Activated CD8-positive, alpha-beta T cell treated with anti-CD3 and anti-CD28 coated beads for 36 hours (primary cell): ENCODE measurements at regions of chr2 and their contacts with region 1.

Region 1: DNA sequence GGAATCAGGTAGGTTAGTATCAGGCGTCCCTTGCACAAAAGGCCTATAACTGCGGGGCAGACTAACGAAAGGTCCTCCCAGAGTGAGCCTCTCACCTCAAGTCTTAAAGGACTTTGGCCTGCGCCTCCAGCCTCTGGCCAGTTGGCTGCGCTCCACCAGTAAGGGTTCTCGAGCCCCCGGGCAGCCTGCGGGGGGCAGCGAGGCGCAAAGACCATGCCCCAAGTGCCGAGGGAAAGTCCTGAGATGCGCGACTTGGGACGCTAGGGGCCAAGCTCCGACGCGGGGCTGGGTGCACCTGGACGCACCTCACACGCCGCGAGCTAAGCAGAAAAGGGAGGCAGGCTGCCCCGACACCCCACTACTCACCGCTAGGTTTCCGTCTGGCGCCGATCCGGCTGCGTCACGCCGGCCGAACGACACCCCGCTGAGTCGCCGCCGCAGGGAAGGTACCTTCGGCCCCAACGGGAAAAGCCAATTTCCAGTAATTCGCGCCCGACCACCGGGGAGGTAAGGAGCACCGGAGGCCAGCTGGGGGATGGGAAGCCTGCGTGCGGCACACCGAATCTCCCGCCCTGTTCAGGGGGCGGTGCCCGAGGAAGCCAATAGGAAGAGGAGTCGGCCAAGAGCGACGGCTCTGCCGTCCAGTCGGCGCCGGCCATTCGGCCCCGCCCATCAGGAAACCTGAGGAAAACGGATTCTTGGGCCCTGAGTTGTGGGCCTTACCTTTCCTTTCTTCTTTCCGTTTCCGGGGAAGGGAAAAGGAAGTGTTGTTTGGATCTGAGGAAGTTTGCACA is at the start of gene ORC2:
- DNase-seq: peak; percentile 94
- ATAC-seq: peak; percentile 97
- H3K4me3 Mint-ChIP-seq: peak within 1 kb of the TSS; percentile 92
- H3K27ac Mint-ChIP-seq: peak within 1 kb of the TSS; percentile 96
- H3K4me1 Mint-ChIP-seq: peaks cover 55% of the 10 kb centered on the region
- H3K27me3 Mint-ChIP-seq: no peaks in the 10 kb centered on the region
- CTCF ChIP-seq: peak; percentile 87
- total RNA-seq, gene ORC2: 51.3 to 59.2 TPM

Region 2: DNA sequence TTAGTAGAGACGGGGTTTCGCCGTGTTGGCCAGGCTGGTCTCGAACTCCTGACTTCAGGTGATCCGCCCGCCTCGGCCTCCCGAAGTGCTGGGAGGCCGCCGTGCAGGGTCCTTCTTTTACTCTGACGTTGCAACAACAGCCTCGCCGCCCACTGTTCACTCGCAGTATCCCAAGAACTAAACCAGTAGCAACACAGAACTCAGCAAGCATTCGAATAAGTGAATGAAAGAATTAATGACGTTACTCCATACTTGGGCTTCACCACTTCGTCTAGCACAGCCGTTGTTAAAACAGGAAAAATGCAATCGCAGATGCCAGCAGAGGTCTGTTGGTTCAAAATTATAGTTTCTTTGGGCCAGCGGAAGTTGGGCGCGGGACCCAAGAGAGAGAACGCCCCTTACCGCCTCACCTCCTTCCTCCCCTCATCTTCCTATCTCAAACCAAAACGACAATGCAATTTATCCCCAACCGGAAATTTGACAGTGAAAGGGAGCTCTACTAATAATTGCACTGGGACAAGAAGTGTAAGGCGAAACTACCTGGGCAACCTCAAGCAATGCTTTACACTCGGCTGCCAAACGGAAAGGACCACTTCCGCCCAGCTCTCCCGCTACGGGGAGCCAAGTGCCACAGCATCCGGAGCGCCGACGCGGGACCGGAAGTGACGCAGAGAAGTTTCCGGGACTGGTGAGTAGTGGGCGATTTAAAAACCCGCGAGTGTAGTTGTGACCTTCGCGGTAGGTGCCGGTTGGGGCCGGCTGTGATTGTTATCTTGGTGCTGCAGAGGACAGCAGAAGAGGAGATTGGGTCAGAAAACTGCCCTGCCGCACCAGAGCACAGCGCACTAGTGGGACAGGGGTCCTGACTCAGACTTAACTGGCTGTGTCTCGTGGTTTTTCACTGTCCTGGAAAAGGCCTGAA is 74.4 kb before region 1 on chr2 and contains the starts of genes NIF3L1 and PPIL3:
- CTCF ChIA-PET with region 1: interaction called, 3 read pairs
- POLR2A ChIA-PET with region 1: interaction called, 13 read pairs
- intact Hi-C with region 1: no loop called
- DNase-seq: peak; percentile 99
- ATAC-seq: peak; percentile 83
- H3K4me3 Mint-ChIP-seq: peak within 1 kb of the TSS; percentile 87
- H3K27ac Mint-ChIP-seq: peak within 1 kb of the TSS; percentile 99
- H3K4me1 Mint-ChIP-seq: peaks cover 46% of the 10 kb centered on the region
- H3K27me3 Mint-ChIP-seq: no peaks in the 10 kb centered on the region
- CTCF ChIP-seq: no peak
- total RNA-seq, gene NIF3L1: 30.8 to 35.3 TPM
- total RNA-seq, gene PPIL3: 97.9 to 99.4 TPM

Region 3: DNA sequence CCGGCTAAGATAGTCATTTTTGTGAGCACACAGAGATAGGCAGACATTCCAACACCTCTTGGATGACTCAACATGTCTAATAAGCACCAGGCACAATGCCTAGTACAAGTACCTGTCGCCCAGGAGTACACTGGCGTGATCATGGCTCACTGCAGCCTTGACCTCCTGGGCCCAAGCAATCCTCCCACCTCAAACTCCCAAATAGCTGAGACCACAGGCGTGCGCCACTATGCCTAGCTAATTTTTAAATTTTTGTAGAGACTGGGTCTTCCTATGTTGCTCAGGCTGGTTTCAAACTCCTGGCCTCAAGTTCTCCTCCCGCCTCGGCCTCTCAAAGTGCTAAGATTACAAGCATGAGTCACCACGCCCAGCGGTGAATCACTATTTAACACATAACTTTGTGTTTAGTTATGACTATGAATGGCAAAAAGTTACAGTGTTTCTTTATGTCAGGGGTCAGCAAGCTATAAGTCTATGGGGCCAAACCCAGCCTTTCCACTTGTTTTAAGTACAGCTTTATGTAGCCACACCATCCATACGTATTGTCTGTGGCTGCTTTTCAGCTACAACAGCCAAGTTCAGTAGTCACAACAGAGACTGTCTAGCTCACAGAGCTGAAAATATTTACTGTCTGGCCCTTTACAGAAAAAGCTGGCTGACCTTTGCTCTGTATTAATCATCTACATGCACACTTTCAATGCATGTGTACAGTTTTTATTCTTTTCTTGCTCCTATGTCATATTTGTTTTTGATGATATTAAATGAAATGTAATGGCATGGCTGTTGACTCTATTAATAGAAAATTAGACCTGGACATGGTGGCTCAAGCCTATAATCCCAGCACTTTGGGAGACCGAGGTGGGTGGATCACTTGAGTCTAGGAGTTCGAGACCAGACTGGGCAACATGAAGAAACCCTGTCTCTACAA is 18.6 kb before region 1 on chr2:
- CTCF ChIA-PET with region 1: interaction called, 9 read pairs
- POLR2A ChIA-PET with region 1: interaction called, 11 read pairs
- intact Hi-C with region 1: no loop called
- DNase-seq: peak; percentile 93
- ATAC-seq: peak; percentile 89
- H3K4me3 Mint-ChIP-seq: no peak overlapping the region
- H3K27ac Mint-ChIP-seq: peak overlapping the region; percentile 81
- H3K4me1 Mint-ChIP-seq: peaks cover 23% of the 10 kb centered on the region
- H3K27me3 Mint-ChIP-seq: no peaks in the 10 kb centered on the region
- CTCF ChIP-seq: no peak

Region 4: DNA sequence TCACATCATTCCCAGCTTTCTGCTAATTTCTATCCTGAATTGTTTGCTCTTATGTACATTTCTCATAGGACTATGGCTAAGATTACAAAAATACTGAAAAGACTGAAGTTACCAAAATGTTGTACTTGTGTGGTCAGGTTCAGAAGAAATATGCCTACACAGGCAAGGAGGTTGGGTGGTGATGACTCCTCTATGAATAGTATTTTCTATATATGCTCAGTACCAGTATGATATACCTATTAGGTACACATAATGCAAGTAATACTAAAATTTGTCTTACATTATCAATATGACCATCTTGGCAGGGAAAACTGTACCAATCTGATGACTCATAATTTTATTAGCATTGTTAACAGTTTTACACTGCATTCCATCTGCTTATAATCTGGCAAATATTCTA is 12.4 kb after region 1 on chr2:
- CTCF ChIA-PET with region 1: interaction called, 23 read pairs
- POLR2A ChIA-PET with region 1: interaction called, 10 read pairs
- intact Hi-C with region 1: no loop called
- DNase-seq: no peak
- ATAC-seq: no peak
- H3K4me3 Mint-ChIP-seq: no peak overlapping the region
- H3K27ac Mint-ChIP-seq: no peak overlapping the region
- H3K4me1 Mint-ChIP-seq: no peaks in the 10 kb centered on the region
- H3K27me3 Mint-ChIP-seq: no peaks in the 10 kb centered on the region
- CTCF ChIP-seq: no peak

Region 5: DNA sequence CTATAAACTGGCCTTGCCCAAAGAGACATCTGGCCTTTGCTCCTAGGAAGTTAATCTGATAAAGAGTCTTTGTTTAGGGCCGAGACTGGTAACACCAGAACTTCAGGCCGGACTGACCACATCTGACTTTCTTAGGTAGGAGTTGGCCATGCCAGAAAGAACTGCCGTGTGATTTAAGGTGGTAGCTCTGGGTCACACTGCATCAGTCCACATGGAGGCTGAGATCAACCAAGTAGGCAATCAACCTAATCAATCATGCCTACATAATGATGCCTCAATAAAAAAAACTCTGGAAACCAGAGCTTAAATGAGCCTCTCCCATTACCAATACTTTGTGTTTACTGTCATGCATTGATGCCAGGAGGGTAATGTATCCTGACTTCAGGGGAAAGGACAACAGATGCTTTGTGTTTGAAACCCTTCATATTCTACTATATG is 44.3 kb after region 1 on chr2:
- CTCF ChIA-PET with region 1: no interaction called
- POLR2A ChIA-PET with region 1: no interaction called
- intact Hi-C with region 1: no loop called
- DNase-seq: no peak
- ATAC-seq: no peak
- H3K4me3 Mint-ChIP-seq: no peak overlapping the region
- H3K27ac Mint-ChIP-seq: no peak overlapping the region
- H3K4me1 Mint-ChIP-seq: no peaks in the 10 kb centered on the region
- H3K27me3 Mint-ChIP-seq: no peaks in the 10 kb centered on the region
- CTCF ChIP-seq: no peak

Region 6: DNA sequence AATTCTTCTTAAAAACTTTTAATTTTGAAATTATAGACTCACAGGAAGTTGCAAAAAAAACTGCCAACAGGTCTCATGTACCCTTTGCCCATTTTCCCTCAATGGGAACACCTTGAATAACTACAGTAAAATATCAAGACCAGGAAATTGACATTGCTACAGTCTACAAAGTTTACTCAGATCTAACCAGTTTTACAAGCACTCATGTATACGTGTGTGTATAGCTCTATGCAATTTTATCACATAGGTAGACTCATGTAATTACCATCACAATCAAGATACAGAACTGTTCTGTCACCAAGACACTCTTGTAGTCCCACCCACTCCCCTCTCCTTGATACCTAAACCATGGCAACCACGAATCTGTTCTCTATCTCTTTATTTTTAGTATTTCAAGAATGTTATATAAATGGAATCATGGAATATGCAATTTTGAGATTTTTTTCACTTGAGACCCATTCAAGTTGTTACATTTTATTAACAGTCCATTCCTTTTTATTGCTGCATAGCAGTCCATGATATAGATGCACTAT is 101.5 kb after region 1 on chr2:
- CTCF ChIA-PET with region 1: interaction called, 64 read pairs
- POLR2A ChIA-PET with region 1: interaction called, 4 read pairs
- intact Hi-C with region 1: loop called (anchors 5 kb)
- DNase-seq: no peak
- ATAC-seq: no peak
- H3K4me3 Mint-ChIP-seq: no peak overlapping the region
- H3K27ac Mint-ChIP-seq: no peak overlapping the region
- H3K4me1 Mint-ChIP-seq: peaks cover 63% of the 10 kb centered on the region
- H3K27me3 Mint-ChIP-seq: peaks cover 1% of the 10 kb centered on the region
- CTCF ChIP-seq: no peak